Posterior vena cava (tissue), 2 donors: ENCODE measurements at regions of chr22 and their contacts with region 1.

Region 1: DNA sequence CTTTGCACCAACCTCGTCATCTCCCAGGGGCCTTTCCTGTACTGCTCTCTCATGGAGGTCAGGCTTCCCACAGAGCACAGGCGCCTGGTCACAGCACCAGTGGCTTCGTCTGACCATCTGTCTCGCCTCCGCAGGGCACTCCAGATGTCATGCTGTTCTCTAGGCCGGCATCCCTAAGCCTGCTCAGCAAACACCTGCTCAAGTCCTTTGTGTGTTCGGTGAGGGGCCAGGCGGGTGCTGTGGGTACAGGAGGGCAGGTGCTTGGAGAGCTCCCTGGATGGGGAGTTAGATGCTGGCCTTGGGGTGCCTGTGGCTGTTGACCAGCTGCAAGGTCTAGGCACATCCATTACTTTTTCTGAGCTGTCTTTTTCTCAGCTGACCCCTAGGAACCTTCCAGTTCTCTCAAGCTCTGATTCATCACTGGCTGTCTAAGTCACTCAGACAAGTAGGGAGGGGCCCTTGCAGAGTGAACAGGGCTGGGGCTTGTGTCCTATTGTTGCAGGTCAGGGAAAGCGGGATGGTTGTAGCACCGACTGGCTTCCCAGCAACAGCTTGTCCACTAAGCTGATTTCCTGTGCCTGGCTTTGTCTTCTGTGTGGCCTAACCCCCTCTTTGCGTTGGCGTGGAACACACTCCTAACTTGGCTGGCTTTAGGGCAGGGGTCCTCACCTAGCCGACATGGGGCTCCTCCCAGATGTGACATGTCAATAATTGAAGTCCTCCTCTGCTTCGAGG is 9.2 kb downstream of the CLDN5 start:
- DNase-seq: peak; percentile 49

Region 2: DNA sequence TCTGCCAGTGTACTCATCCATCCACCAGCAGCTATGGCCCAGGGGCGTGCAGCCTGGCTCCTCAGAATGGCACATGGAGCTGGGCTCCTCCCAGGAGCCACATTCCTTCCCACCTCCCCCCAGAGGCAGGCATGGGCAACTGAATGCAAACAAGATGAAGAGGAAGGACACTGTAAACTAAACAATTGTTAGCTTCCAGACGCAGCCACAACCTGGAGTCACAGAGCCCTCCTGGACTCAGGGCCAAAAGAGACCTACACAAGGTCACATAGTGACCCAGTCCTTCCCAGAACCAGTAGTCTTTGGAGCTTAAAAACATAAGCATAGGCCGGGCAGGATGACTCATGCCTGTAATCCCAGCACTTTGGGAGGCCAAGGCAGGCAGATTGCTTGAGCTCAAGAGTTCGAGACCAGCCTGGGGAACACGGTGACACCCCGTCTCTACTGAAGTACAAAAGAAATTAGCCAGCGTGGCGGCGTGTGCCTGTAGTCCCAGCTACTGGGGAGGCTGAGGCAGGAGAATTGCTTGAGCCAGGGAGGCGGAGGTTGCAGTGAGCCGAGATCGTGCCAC is 39.9 kb after region 1 on chr22:
- intact Hi-C with region 1: no loop called
- DNase-seq: peak; percentile 52

Region 3: DNA sequence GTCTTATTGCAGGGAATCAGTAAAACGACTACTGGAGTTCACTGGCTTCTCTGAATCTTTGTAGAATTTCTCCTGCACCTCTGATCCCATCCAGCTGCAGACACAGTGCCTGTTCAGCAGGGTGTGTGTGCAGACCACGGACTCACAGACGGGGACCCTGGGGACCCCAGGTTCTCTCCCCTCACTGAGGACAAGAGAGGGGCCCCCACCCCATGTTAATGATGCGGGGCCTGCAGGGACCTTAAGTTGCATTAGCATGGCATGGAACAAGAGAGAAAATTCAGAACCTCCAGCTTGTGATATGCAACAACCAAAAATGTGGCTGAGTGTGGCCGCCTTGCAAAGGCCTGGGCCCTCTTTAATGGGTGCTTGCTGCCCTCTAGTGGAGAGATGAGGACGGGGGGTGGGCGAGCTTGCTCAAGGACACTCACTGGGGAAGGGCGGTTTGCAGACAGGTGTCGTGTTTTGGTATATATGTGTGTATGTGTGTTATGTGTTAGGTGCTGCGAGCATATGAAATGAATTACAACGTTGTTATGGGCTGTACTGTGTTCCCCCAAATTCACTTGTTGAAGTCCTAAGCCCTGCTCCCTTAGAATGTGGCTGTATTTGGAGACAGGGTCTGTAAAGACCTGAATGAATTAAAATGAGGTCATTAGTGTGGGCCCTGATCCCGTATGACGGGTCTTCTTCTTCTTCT is 114.9 kb after region 1 on chr22:
- intact Hi-C with region 1: loop called in 1 of 2 experiments (anchors 10 kb)
- DNase-seq: peak; percentile 93

Region 4: GRCh38 chr22:19641254-19641982 is 126.4 kb after region 1 on chr22:
- intact Hi-C with region 1: no loop called
- DNase-seq: peak; percentile 50